ENCODE measurements at regions of chr7 and their contacts with region 1.

Region 1: GRCh38 chr7:106153891-106154449 is 41.9 kb upstream of the SYPL1 start:
- DNase-seq: peak; percentile 93
- ATAC-seq: peak; percentile 99
- H3K4me3 ChIP-seq: peak overlapping the region; percentile 39; the same call in 1 of the 2 replicates
- H3K27ac ChIP-seq: no peak overlapping the region
- H3K4me1 ChIP-seq: peaks cover 8% of the 10 kb centered on the region
- H3K27me3 ChIP-seq: no peaks in the 10 kb centered on the region
- CTCF ChIP-seq: peak; percentile 99

Region 2: DNA sequence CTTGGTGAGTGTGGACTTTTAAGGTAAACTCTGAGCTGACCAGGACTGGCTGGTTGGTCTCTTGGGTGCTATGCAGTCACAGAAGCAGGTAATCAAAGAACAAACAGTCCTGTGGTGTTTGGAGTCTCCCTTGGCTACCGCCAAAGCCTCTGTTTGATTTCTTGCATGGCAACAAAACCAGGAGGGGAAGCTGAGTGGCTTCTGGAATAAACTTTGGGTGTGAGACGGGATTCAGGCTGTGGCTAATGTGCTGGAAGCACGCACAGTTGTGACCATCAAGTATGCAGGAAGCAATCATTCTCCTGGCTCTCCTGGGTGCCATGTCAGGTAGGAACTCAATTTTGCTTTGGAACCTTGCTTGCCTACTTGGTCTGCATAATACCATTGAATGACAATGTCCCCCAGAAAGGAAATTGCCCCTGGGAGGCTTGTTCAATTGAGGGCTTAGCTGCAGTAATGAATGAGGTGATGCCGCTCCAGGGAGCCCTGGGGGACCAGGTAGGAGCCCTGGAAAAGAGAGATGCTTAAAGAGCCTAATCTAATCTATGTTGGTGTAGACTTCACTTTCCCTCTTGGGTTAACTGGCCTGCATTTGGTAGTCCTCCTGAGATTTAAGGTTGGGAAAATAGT is 190.8 kb before region 1 on chr7 and contains the start of gene CDHR3:
- CTCF ChIA-PET with region 1: no interaction called
- POLR2A ChIA-PET with region 1: no interaction called
- intact Hi-C with region 1: no loop called
- DNase-seq: no peak
- ATAC-seq: peak; percentile 38; the same call in 1 of the 2 replicates
- H3K4me3 ChIP-seq: no peak within 1 kb of the TSS
- H3K27ac ChIP-seq: no peak within 1 kb of the TSS
- H3K4me1 ChIP-seq: no peaks in the 10 kb centered on the region
- H3K27me3 ChIP-seq: no peaks in the 10 kb centered on the region
- CTCF ChIP-seq: no peak
- total RNA-seq, gene CDHR3: 5.9 and 9.8 TPM in 2 replicates

Region 3: DNA sequence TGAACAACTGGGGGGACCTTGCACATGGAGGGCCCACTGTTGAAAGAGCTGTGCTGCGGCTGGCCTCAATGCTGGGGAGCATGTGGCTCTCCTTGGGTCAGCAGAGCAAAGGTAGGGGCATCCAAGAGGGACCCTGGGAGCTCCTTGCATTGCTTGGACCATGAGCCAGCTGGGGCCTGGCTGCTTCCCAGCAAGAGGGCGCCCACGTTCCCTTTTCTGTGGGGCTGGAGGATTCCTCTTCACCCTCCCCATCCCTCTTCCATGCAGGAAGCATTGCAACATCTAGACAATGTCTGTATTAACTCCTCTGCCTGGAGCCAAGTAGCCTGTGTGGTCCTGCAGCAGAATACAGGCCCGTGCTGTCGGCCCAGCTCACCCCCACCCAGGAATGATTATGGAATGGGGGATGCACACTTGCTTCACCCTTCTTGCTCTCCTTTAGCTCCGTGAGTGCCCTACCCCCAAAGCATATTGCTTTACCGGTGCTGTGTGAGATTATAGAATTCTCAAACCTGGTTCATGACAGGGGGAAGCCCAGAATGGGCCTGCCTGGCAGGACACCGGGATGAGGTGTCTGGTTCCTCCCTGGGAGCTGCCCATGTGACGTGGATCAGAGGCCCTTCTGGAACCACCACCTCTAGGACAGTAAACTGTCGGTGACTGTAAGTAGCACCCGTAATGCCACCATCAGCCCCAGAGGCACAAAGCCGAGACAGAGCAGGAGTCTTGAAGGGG is 103.8 kb before region 1 on chr7:
- CTCF ChIA-PET with region 1: interaction called, 10 read pairs
- POLR2A ChIA-PET with region 1: no interaction called
- intact Hi-C with region 1: no loop called
- DNase-seq: peak; percentile 50
- ATAC-seq: peak; percentile 23
- H3K4me3 ChIP-seq: no peak overlapping the region
- H3K27ac ChIP-seq: no peak overlapping the region
- H3K4me1 ChIP-seq: peaks cover 14% of the 10 kb centered on the region
- H3K27me3 ChIP-seq: no peaks in the 10 kb centered on the region
- CTCF ChIP-seq: peak; percentile 41

Region 4: DNA sequence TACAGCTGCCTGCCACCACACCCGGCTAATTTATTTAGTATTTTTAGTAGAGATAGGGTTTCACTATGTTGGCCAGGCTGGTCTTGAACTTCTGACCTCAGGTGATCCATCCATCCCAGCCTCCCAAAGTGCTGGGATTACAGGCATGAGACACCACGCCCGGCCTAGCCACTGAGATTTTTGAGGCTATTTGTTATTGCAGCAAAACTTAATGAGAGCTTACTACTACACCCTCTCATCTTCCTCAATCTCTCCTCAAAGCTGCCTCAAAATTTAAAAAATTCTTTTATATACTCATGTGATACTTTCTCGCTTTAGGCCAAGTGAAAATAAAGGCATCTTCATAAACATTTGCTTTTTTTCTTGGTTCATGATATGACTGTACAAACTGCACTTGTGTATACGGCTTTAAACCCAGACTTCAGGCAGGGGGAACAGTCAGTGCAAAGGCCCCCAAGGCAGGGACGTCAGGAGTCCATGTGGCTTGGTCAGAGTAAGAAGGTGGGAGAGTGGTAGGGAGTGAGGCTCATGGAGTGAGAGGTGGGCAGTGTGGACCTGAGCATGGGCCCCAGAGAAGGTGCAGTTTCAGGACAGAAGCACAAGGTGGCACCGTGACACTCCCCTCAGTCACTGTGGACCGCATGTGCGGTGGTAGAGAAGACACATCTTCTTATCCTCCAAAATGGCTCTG is 97.3 kb before region 1 on chr7:
- CTCF ChIA-PET with region 1: interaction called, 10 read pairs
- POLR2A ChIA-PET with region 1: no interaction called
- intact Hi-C with region 1: loop called (anchors 1 kb)
- DNase-seq: peak; percentile 92
- ATAC-seq: peak; percentile 95
- H3K4me3 ChIP-seq: no peak overlapping the region
- H3K27ac ChIP-seq: no peak overlapping the region
- H3K4me1 ChIP-seq: peaks cover 21% of the 10 kb centered on the region
- H3K27me3 ChIP-seq: no peaks in the 10 kb centered on the region
- CTCF ChIP-seq: peak; percentile 98

Region 5: DNA sequence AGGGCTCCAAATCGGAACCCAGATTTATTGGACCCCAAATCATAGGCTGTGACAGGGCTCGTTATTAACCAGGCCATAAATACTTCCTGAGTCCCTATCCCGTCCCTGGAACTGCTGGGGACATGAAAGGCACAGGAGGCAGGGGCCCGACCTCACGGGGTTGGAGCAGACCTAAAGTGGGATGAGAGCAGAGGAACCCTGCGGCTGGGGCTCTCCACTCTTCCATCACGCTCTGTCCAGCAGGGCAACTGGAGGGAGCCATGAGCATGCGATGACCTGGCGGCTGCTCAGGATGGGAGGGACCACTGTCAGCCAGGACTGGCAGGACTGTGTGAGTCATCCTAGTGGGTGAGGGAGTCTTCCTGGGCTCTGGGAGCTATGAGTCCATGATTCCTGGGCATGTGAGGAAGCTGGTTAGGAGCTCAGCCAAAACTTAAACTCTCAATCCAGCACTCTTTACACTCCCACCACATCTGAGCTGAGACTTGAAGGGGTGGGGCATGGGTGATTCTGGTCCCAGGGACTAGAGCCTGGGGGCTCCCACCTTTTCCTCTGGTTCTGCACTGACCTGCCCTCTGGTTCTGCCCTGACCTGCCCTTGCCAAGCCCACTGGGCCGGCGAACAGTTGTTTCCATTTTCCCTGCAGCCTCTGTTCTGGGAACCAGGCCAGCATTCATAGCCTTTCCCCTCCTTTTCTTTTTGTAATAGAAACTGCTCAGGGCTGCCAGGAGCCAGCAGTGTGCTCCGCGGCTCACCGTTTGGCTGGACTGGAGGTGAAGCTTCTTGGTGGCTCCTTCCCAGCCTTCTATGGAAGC is 89.0 kb before region 1 on chr7:
- CTCF ChIA-PET with region 1: interaction called, 6 read pairs
- POLR2A ChIA-PET with region 1: interaction called, 3 read pairs
- intact Hi-C with region 1: loop called (anchors 2 kb)
- DNase-seq: peak; percentile 99
- ATAC-seq: peak; percentile 86
- H3K4me3 ChIP-seq: peak overlapping the region; percentile 71
- H3K27ac ChIP-seq: peak overlapping the region; percentile 94
- H3K4me1 ChIP-seq: peaks cover 63% of the 10 kb centered on the region
- H3K27me3 ChIP-seq: no peaks in the 10 kb centered on the region
- CTCF ChIP-seq: no peak

Region 6: DNA sequence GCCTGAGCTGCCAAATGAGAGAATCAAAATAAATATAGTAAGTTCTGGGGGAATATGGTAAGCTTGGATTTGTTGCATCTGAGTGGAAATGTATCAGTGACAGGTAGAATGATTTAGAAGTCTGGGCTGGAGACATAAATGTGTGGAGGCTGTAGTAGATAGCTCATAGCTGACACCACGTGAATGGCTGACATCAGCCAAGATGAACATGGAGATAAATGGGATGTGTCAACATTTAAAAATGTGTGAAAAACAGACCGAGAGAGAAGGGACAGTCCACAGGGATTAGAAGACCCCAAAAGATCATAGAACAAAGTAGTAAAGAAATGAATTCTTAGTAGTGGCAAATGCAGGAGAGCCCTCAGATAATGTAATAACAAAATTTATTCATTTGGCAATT is 89.9 kb after region 1 on chr7:
- CTCF ChIA-PET with region 1: no interaction called
- POLR2A ChIA-PET with region 1: no interaction called
- intact Hi-C with region 1: no loop called
- DNase-seq: no peak
- ATAC-seq: no peak
- H3K4me3 ChIP-seq: no peak overlapping the region
- H3K27ac ChIP-seq: no peak overlapping the region
- H3K4me1 ChIP-seq: peaks cover 8% of the 10 kb centered on the region
- H3K27me3 ChIP-seq: no peaks in the 10 kb centered on the region
- CTCF ChIP-seq: no peak

Measured in PC-3 (cell line).